Vagina (tissue), 2 donors: ENCODE measurements at regions of chr12 and their contacts with region 1.

Region 1: DNA sequence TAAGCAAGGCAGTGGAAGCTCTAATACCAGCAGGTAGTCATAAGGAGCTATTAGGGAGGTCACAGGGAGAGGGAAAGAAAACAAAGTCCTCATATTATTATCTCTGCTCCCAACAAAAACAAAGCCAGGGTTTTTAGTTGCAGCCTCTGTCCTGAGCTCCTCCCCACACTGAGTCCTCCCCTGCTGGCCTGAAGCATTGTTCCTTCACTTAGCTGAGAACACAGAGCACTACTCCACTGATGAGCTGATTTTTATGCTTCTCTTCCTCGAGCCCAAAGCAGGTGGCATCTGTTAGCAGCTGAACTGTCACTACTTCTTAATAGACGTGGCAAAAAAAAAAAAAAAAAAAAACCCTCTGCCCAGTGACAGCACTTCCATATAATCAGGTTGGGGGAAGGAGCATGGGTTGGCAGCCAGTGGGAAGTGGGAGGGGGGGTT is 10.5 kb upstream of the STAC3 start:
- DNase-seq: no peak
- H3K4me3 ChIP-seq: no peak overlapping the region
- H3K27ac ChIP-seq: no peak overlapping the region
- H3K4me1 ChIP-seq: no peaks in the 10 kb centered on the region
- H3K27me3 ChIP-seq: no peaks in the 10 kb centered on the region
- CTCF ChIP-seq: no peak
- POLR2A ChIP-seq: no peak

Region 2: GRCh38 chr12:57319678-57320469 is 58.4 kb after region 1 on chr12:
- intact Hi-C with region 1: loop called (anchors 5 kb)
- DNase-seq: no peak
- H3K4me3 ChIP-seq: no peak overlapping the region
- H3K27ac ChIP-seq: no peak overlapping the region
- H3K4me1 ChIP-seq: no peaks in the 10 kb centered on the region
- H3K27me3 ChIP-seq: no peaks in the 10 kb centered on the region
- CTCF ChIP-seq: no peak
- POLR2A ChIP-seq: no peak

Region 3: DNA sequence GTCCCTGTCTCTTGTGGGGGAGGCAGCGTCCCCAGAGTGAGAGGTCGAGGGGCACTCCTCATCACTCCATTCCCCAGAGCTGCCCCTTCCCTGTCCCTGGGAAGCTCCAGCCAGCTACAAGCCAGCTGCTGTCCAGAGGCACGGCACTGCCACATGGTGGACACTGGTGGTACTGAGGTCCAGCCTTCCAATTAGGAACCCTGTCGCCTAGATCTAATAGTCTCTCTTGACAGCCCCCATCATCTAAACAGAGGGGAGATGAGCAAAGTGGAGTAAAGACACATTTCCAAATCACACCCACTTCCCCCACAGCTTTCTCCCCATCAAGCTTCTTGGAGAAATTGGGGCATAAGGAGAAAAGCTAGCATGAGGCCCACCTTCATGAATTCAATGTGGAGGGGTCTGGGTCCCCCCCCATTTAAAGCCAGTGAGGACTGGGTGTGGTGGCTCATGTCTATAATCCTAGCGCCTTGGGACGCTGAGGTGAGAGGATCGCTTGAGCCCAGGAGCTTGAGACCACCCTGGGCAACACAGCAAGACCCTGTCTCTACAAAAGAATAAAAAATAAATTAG is 191.6 kb after region 1 on chr12:
- intact Hi-C with region 1: loop called (anchors 5 kb)
- DNase-seq: no peak
- H3K4me3 ChIP-seq: no peak overlapping the region
- H3K27ac ChIP-seq: no peak overlapping the region
- H3K4me1 ChIP-seq: no peaks in the 10 kb centered on the region
- H3K27me3 ChIP-seq: no peaks in the 10 kb centered on the region
- CTCF ChIP-seq: peak; percentile 73 to 86 (median 81)
- POLR2A ChIP-seq: no peak